GM12878 (cell line): ENCODE measurements at regions of chr12 and their contacts with region 1.

Region 1: DNA sequence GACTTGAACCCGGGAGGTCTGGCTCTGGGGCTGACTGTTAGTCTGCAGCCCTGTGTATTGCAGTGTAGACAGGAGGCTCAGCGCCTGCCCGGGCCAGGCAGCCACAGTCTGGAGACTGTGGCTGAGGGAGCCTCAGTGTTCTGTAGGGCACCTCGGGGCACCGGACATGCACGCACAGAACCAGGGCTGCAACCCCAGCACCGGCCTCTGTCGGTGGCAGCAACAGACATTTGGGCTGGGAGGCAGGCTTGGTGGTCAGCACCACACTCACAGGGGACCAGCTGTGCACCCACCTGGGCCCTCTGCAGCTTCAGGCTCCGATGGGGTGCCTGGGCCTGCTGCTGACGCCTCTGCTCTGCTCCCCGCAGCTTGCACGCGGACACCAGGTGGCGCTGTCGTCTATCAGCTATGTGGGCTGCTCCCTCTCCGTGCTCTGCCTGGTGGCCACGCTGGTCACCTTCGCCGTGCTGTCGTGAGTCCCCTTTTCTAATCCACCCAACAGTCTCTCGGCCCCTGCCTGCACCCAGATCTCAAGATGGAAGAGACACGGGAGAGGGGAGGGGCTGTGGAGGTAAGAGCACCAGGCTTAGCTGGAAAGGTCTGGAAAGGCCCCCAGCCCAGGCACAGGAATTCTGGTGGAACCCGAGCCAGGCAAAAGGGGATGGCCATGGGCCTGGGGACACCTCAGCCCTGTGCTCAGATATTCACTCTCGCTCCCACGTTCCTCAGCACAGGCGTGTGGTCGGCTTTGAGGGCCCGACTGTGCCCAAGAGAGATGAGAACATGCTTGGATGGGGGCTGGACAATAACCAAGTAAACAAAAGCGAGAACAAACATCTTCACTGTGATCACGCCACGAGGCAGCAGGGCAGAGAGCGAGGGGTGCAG is 151.0 kb downstream of the ADGRD1 start:
- DNase-seq: no peak
- ATAC-seq: peak; percentile 88
- H3K4me3 ChIP-seq: no peak overlapping the region
- H3K27ac ChIP-seq: no peak overlapping the region
- H3K4me1 ChIP-seq: peaks cover 46% of the 10 kb centered on the region
- H3K27me3 ChIP-seq: no peaks in the 10 kb centered on the region
- CTCF ChIP-seq: peak; percentile 92 to 96 (median 95)
- EP300 ChIP-seq: no peak
- POLR2A ChIP-seq: no peak
- RAD21 ChIP-seq: peak; percentile 84

Region 2: GRCh38 chr12:130672089-130672825 is 432.4 kb before region 1 on chr12:
- CTCF ChIA-PET with region 1: no interaction called
- POLR2A ChIA-PET with region 1: no interaction called
- RAD21 ChIA-PET with region 1: no interaction called
- SMC1A ChIA-PET with region 1: no interaction called
- in situ Hi-C with region 1: no loop called
- intact Hi-C with region 1: no loop called
- DNase-seq: no peak
- ATAC-seq: no peak
- H3K4me3 ChIP-seq: no peak overlapping the region
- H3K27ac ChIP-seq: no peak overlapping the region
- H3K4me1 ChIP-seq: no peaks in the 10 kb centered on the region
- H3K27me3 ChIP-seq: no peaks in the 10 kb centered on the region
- CTCF ChIP-seq: no peak
- EP300 ChIP-seq: no peak
- POLR2A ChIP-seq: no peak
- RAD21 ChIP-seq: no peak

Region 3: DNA sequence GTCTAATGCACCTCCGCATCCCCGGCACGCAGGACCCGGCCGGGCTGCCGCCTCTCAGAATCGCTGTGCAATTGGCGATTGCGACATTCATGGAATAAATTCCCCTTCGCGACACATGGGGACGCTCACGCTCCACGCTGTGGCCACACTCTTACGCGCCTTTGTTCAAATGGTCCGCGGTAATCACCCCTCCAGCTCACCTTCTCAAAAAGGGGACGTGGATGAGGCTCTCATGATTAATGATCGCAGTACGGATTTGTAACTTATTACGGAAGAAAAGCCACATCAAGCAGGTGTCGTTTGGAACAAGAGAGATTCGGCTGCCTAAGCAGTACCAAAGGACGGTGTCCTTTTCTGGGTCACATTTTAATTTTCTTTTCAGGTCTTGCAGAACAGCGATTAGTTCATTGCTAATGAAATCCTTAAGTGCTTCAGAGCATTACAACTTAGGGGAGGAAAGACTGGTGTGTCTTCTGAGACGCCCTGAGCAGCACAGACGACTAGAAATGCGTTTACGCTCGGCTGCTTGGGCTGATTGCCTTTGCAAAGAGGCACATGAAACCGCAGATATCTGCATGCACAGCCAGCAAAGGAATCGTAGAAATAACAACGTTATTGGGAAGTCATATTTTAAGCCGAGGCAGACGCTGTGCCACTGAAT is 188.3 kb before region 1 on chr12:
- CTCF ChIA-PET with region 1: interaction called, 4 read pairs
- POLR2A ChIA-PET with region 1: no interaction called
- RAD21 ChIA-PET with region 1: interaction called, 10 read pairs
- SMC1A ChIA-PET with region 1: interaction called, 3 read pairs
- in situ Hi-C with region 1: no loop called
- intact Hi-C with region 1: loop called (anchors 5 kb)
- DNase-seq: peak; percentile 21
- ATAC-seq: peak; percentile 75
- H3K4me3 ChIP-seq: no peak overlapping the region
- H3K27ac ChIP-seq: no peak overlapping the region
- H3K4me1 ChIP-seq: no peaks in the 10 kb centered on the region
- H3K27me3 ChIP-seq: no peaks in the 10 kb centered on the region; a peak in 1 of 4 replicates
- CTCF ChIP-seq: peak; percentile 82 to 91 (median 86)
- EP300 ChIP-seq: no peak
- POLR2A ChIP-seq: no peak
- RAD21 ChIP-seq: peak; percentile 98

Region 4: GRCh38 chr12:131074221-131075083 is 30.3 kb before region 1 on chr12:
- CTCF ChIA-PET with region 1: interaction called, 11 read pairs
- POLR2A ChIA-PET with region 1: no interaction called
- RAD21 ChIA-PET with region 1: no interaction called
- SMC1A ChIA-PET with region 1: no interaction called
- in situ Hi-C with region 1: no loop called
- intact Hi-C with region 1: no loop called
- DNase-seq: no peak
- ATAC-seq: peak; percentile 68
- H3K4me3 ChIP-seq: no peak overlapping the region
- H3K27ac ChIP-seq: no peak overlapping the region
- H3K4me1 ChIP-seq: no peaks in the 10 kb centered on the region; the same call in 1 of the 2 replicates
- H3K27me3 ChIP-seq: no peaks in the 10 kb centered on the region
- CTCF ChIP-seq: no peak
- EP300 ChIP-seq: no peak
- POLR2A ChIP-seq: no peak
- RAD21 ChIP-seq: no peak

Region 5: DNA sequence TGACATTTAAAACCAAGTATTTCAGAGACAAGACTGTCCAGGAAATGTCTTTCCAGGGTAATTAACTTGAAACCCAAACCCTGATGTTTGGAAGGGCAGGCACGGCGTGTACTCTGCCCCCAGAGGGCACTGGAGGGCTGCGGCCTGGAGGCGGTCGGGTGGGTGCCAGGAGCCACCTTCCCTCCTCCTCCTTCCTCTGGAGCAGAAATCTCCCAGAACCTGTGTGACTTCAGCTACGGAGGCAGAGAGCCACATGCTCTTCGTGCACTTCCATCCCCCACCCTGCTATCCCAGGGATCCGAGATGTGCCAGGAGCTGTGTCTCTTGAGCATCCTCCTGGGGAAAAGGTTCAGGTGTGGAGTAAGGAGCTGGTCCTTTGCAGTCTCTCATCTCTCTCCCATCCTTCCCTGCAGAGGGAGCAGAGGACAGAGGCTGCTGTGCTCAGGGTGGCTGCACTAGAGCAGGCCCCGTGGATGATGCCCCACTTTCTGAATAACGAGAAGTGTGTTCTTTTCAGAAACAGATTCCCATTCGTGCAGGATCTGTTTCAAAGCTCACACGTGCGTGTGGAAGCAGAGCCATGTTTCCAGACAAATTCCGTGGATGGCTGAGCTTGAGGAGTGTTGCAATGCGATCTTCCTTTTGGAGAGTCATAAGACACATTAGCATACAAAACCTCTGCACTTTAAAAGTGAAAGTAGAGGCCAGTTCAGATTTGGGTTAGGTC is 11.8 kb after region 1 on chr12:
- CTCF ChIA-PET with region 1: interaction called, 80 read pairs
- POLR2A ChIA-PET with region 1: no interaction called
- RAD21 ChIA-PET with region 1: interaction called, 16 read pairs
- SMC1A ChIA-PET with region 1: interaction called, 37 read pairs
- in situ Hi-C with region 1: no loop called
- intact Hi-C with region 1: no loop called
- DNase-seq: no peak
- ATAC-seq: peak; percentile 40; the same call in 2 of the 3 replicates
- H3K4me3 ChIP-seq: no peak overlapping the region
- H3K27ac ChIP-seq: no peak overlapping the region
- H3K4me1 ChIP-seq: no peaks in the 10 kb centered on the region
- H3K27me3 ChIP-seq: no peaks in the 10 kb centered on the region
- CTCF ChIP-seq: peak; percentile 31 to 47 (median 40); a peak in 5 of 6 replicates
- EP300 ChIP-seq: no peak
- POLR2A ChIP-seq: no peak
- RAD21 ChIP-seq: peak; percentile 47

Region 6: DNA sequence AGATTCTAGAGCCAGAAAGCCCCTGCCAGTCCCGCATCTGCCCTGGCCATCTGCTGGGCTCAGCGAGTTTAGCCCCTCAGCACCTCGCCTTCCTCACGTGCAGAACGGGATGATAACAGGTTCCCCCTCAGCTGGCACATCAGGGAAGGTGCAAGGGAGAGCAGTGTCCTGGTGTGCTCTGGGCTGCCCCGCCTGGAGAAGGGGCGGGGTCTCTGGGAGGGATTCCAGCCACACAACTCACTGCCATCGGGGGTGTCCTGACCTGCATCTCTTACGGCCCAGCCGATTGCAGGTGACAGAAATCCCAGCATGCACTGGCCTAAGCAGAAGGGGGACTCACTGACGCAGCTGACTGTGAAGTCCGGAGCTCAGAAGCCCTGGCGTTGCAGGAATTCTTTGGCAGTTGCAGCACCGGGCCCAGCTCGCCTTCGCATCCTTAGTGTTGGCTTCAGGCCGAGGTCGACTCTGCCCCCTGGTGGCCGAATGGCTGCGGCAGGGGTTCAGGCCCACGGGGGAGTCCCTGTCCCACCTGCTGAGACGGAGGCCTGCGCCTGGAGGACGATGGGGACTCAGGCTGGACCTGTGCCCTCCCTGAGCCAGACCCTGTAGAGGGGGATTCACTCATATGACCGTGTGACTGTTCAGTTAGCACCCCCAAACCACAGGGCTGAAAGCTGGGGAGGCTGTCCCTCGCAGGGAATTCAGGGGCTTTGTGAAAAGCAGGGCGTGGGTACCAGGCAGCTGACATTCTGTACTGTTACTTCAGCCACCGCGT is 27.6 kb after region 1 on chr12:
- CTCF ChIA-PET with region 1: interaction called, 198 read pairs
- POLR2A ChIA-PET with region 1: interaction called, 16 read pairs
- RAD21 ChIA-PET with region 1: interaction called, 101 read pairs
- SMC1A ChIA-PET with region 1: interaction called, 86 read pairs
- in situ Hi-C with region 1: no loop called
- intact Hi-C with region 1: loop called (anchors 1 kb)
- DNase-seq: no peak
- ATAC-seq: peak; percentile 97
- H3K4me3 ChIP-seq: no peak overlapping the region
- H3K27ac ChIP-seq: no peak overlapping the region
- H3K4me1 ChIP-seq: no peaks in the 10 kb centered on the region
- H3K27me3 ChIP-seq: no peaks in the 10 kb centered on the region
- CTCF ChIP-seq: peak; percentile 81 to 84 (median 83)
- EP300 ChIP-seq: no peak
- POLR2A ChIP-seq: no peak
- RAD21 ChIP-seq: peak; percentile 79

Region 7: DNA sequence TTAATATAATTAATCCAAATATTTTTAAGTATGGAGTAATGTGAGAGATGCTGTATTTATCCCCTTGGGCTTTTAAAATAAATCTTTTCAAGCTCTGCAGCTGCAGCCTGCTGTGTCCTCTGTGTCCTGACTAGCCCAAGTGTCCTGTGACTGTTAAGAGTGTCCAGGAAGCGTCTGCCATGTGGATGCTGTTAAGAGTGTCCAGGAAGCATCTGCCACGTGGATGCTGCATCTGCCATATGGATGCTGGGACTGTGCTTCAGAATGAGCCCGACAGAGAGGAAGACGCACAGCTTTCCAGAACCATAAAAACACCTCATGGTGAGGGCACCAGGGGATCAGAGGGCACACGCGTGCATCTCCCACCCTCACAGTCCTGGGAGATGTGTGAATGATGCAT is 156.2 kb after region 1 on chr12:
- CTCF ChIA-PET with region 1: no interaction called
- POLR2A ChIA-PET with region 1: no interaction called
- RAD21 ChIA-PET with region 1: no interaction called
- SMC1A ChIA-PET with region 1: no interaction called
- in situ Hi-C with region 1: no loop called
- intact Hi-C with region 1: no loop called
- DNase-seq: no peak
- ATAC-seq: no peak
- H3K4me3 ChIP-seq: no peak overlapping the region
- H3K27ac ChIP-seq: no peak overlapping the region
- H3K4me1 ChIP-seq: no peaks in the 10 kb centered on the region
- H3K27me3 ChIP-seq: no peaks in the 10 kb centered on the region; a peak in 1 of 4 replicates
- CTCF ChIP-seq: no peak
- EP300 ChIP-seq: no peak
- POLR2A ChIP-seq: no peak
- RAD21 ChIP-seq: no peak

Region 8: GRCh38 chr12:131466306-131466705 is 361.6 kb after region 1 on chr12:
- CTCF ChIA-PET with region 1: no interaction called
- POLR2A ChIA-PET with region 1: no interaction called
- RAD21 ChIA-PET with region 1: no interaction called
- SMC1A ChIA-PET with region 1: no interaction called
- in situ Hi-C with region 1: no loop called
- intact Hi-C with region 1: no loop called
- DNase-seq: no peak
- ATAC-seq: no peak
- H3K4me3 ChIP-seq: no peak overlapping the region
- H3K27ac ChIP-seq: no peak overlapping the region
- H3K4me1 ChIP-seq: no peaks in the 10 kb centered on the region
- H3K27me3 ChIP-seq: no peaks in the 10 kb centered on the region; a peak in 1 of 4 replicates
- CTCF ChIP-seq: no peak
- EP300 ChIP-seq: no peak
- POLR2A ChIP-seq: no peak
- RAD21 ChIP-seq: no peak

Region 9: GRCh38 chr12:131536337-131536736 is 431.6 kb after region 1 on chr12:
- CTCF ChIA-PET with region 1: no interaction called
- POLR2A ChIA-PET with region 1: no interaction called
- RAD21 ChIA-PET with region 1: no interaction called
- SMC1A ChIA-PET with region 1: no interaction called
- in situ Hi-C with region 1: no loop called
- intact Hi-C with region 1: no loop called
- DNase-seq: no peak
- ATAC-seq: no peak; the same call in 1 of the 3 replicates
- H3K4me3 ChIP-seq: no peak overlapping the region
- H3K27ac ChIP-seq: no peak overlapping the region
- H3K4me1 ChIP-seq: no peaks in the 10 kb centered on the region
- H3K27me3 ChIP-seq: no peaks in the 10 kb centered on the region
- CTCF ChIP-seq: no peak
- EP300 ChIP-seq: peak in 1 of 2 experiments; percentile 17; a peak in 1 of 4 replicates
- POLR2A ChIP-seq: no peak
- RAD21 ChIP-seq: no peak

Region 10: DNA sequence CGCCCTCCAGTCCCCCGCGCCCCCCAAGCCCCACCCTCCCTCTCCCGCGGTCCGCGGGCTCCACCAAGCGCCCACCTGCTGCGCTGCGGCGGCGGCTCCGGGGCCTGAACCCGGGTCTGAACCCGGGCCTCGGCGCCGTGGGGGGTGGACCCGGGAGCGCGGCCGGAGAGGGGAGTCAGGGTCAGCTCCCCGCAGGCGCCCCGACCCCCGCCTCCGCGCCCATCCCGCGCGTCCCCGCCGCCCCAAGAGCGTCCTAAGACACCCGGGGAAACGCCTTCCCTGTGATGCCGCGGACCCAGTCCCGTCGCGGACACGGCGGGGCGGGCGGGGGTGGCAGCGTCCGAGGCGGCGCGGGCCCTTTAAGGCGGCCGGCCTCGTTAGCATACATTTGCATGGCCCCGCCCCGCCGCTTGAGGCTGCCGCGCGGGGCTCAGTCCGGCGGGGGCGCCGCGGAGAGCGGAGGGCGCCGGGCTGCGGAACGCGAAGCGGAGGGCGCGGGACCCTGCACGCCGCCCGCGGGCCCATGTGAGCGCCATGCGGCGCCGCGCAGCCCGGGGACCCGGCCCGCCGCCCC is 723.3 kb after region 1 on chr12 and contains the start of gene MMP17:
- CTCF ChIA-PET with region 1: interaction called, 5 read pairs
- POLR2A ChIA-PET with region 1: no interaction called
- RAD21 ChIA-PET with region 1: no interaction called
- SMC1A ChIA-PET with region 1: no interaction called
- in situ Hi-C with region 1: loop called (anchors 10 kb)
- intact Hi-C with region 1: no loop called
- DNase-seq: no peak
- ATAC-seq: peak; percentile 63
- H3K4me3 ChIP-seq: peak within 1 kb of the TSS; percentile 50; the same call in 1 of the 2 replicates
- H3K27ac ChIP-seq: no peak within 1 kb of the TSS
- H3K4me1 ChIP-seq: no peaks in the 10 kb centered on the region
- H3K27me3 ChIP-seq: peaks cover 7 to 9% of the 10 kb centered on the region in 2 experiments
- CTCF ChIP-seq: peak in 2 of 3 experiments; percentile 40 to 41; a peak in 3 of 6 replicates
- EP300 ChIP-seq: no peak
- POLR2A ChIP-seq: 0 out of 2 replicates have a peak, but pooled peaks have one; percentile 26
- RAD21 ChIP-seq: peak; percentile 51
- polyA plus RNA-seq, gene MMP17: not detected